ENCODE measurements at regions of chr7 and their contacts with region 1.

Region 1: GRCh38 chr7:123624527-123625183 is 23.0 kb downstream of the ASB15 start:
- DNase-seq: peak; percentile 89
- H3K4me3 Mint-ChIP-seq: no peak overlapping the region
- H3K27ac Mint-ChIP-seq: no peak overlapping the region
- H3K4me1 Mint-ChIP-seq: no peaks in the 10 kb centered on the region
- H3K27me3 Mint-ChIP-seq: peaks cover 2% of the 10 kb centered on the region

Region 2: GRCh38 chr7:123417580-123417979 is 207.1 kb before region 1 on chr7:
- intact Hi-C with region 1: no loop called
- DNase-seq: no peak
- H3K4me3 Mint-ChIP-seq: no peak overlapping the region
- H3K27ac Mint-ChIP-seq: no peak overlapping the region
- H3K4me1 Mint-ChIP-seq: no peaks in the 10 kb centered on the region
- H3K27me3 Mint-ChIP-seq: no peaks in the 10 kb centered on the region

Region 3: GRCh38 chr7:123705211-123705901 is 80.7 kb after region 1 on chr7:
- intact Hi-C with region 1: loop called (anchors 2 kb)
- DNase-seq: no peak
- H3K4me3 Mint-ChIP-seq: no peak overlapping the region
- H3K27ac Mint-ChIP-seq: no peak overlapping the region
- H3K4me1 Mint-ChIP-seq: peaks cover 8% of the 10 kb centered on the region
- H3K27me3 Mint-ChIP-seq: no peaks in the 10 kb centered on the region

Region 4: GRCh38 chr7:123757095-123757494 is 132.4 kb after region 1 on chr7:
- intact Hi-C with region 1: no loop called
- DNase-seq: no peak
- H3K4me3 Mint-ChIP-seq: no peak overlapping the region
- H3K27ac Mint-ChIP-seq: no peak overlapping the region
- H3K4me1 Mint-ChIP-seq: peaks cover 9% of the 10 kb centered on the region
- H3K27me3 Mint-ChIP-seq: peaks cover 5% of the 10 kb centered on the region

Region 5: GRCh38 chr7:123823898-123824753 is 199.5 kb after region 1 on chr7:
- intact Hi-C with region 1: no loop called
- DNase-seq: peak; percentile 78
- H3K4me3 Mint-ChIP-seq: peak overlapping the region; percentile 31
- H3K27ac Mint-ChIP-seq: peak overlapping the region; percentile 66
- H3K4me1 Mint-ChIP-seq: peaks cover 16% of the 10 kb centered on the region
- H3K27me3 Mint-ChIP-seq: peaks cover 14% of the 10 kb centered on the region

Region 6: DNA sequence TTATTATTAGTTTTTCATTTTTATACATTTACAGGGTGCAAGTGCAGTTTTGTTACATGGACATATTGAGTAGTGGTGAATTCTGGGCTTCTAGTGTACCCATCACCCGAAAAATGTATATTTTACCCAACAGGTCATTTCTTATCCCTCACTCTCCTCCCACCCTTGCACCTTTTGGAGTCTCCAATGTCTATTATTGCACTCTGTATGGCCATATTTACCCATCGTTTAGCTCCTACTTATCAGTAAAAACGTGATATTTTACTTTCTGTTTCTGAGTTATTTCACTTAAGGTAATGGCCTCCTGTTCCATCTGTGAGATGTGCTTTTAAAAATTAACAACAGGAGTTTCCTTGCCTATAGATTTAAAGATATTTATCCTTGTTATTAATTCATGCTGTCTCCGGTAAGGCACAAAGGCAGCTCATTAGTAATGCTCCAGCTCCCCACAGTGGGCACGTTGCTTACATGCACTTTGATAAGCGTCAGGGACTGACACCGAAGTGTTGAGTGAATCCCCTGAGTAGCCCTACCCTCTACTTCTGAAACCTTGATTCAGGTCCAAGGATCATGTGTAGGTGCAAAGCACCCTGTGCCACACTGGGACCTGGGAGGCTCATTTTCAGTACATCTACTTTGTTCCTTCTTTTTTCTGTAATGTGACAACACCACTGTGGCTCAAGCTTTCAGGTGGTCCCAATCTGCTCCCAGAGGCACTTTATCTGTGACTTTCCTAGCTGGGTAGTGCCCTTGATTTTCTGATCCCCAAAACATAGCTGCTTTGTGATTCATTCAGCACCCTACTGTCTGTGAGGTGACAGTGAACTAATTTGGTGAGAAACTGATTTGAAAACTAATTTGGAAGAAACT is 247.6 kb after region 1 on chr7:
- intact Hi-C with region 1: loop called (anchors 5 kb)
- DNase-seq: peak; percentile 75
- H3K4me3 Mint-ChIP-seq: no peak overlapping the region
- H3K27ac Mint-ChIP-seq: no peak overlapping the region
- H3K4me1 Mint-ChIP-seq: no peaks in the 10 kb centered on the region
- H3K27me3 Mint-ChIP-seq: peaks cover 4% of the 10 kb centered on the region

Region 7: DNA sequence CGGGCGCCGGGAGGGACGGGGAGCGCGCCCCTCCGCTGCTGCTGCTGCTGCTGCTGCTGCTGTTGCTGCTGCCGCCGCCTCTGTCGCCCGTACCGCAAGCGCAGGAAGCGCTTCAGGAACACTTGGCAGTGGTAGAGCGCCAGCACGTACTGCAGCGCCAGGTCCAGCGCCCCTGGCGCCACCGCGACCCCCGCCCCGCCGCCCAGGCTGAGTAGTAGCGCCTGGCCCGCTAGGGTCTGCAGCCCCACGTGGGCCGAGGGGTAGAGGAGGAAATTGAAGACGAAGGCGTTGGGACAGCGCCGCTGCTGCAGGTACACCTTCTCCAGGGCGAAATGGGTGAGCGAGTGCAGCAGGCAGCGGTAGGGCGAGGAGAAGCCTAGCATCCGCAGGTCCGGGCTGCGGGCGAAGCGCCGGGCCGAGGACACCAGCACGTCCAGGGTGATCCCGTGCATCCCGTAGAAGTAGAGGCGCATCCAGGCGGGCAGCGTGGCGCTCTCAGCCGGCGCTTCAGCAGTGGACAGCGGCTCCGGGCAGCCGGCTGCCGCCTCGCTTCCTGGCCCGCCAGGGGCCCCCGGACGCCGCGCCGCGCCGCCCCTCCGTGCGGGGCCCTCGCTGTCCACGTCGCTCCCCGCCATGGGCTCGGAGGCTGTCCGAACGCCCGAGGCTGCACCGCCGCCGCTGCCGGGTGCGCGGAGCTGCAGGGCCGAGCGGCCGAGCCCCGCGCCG is 407.9 kb after region 1 on chr7 and contains the start of gene TMEM229A:
- intact Hi-C with region 1: no loop called
- DNase-seq: peak; percentile 63
- H3K4me3 Mint-ChIP-seq: peak within 1 kb of the TSS; percentile 64
- H3K27ac Mint-ChIP-seq: no peak within 1 kb of the TSS
- H3K4me1 Mint-ChIP-seq: peaks cover 4% of the 10 kb centered on the region
- H3K27me3 Mint-ChIP-seq: peaks cover 55% of the 10 kb centered on the region
- total RNA-seq, gene TMEM229A: not detected in 2 replicates